BJ (cell line): ENCODE measurements at regions of chr9 and their contacts with region 1.

Region 1: DNA sequence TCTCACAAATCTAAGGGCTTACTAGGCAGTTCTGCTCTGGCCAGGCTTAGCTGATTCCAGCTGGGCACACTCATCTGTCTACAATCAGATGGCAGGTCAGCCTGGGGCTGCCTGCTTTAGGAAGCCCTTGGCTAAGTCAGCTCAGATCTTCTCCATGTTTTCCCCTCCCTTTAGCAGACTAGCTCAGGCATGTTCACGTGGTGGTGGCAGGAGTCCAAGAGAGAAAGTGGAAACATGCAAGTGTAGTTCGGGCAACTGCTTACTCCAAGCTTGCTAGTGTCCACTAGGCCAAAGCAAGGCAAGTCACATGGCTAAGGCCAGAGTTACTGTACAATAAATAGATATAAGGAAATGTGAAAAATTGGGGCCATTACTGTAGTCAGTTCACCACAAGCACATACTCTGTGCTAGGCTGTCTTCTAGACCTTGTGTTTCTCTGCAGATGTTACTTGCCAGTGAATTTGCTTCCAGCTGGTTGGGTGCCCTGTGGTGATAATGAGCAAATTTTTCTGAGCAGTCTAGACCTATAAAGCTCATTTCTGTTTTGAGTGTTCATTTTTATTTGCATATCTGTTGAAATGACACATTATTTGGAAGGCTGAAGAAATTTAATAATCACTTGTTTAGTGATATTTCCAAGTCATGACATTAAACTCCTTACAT is 38.3 kb downstream of the RECK start:
- DNase-seq: peak; percentile 49
- H3K4me3 ChIP-seq: no peak overlapping the region
- H3K27me3 ChIP-seq: no peaks in the 10 kb centered on the region
- CTCF ChIP-seq: no peak

Region 2: GRCh38 chr9:35945341-35946018 is 129.5 kb before region 1 on chr9:
- CTCF ChIA-PET with region 1: no interaction called
- POLR2A ChIA-PET with region 1: no interaction called
- DNase-seq: peak; percentile 26
- H3K4me3 ChIP-seq: no peak overlapping the region
- H3K27me3 ChIP-seq: no peaks in the 10 kb centered on the region
- CTCF ChIP-seq: peak; percentile 92

Region 3: GRCh38 chr9:36053971-36054370 is 21.0 kb before region 1 on chr9:
- CTCF ChIA-PET with region 1: no interaction called
- POLR2A ChIA-PET with region 1: interaction called, 15 read pairs
- DNase-seq: no peak
- H3K4me3 ChIP-seq: no peak overlapping the region
- H3K27me3 ChIP-seq: no peaks in the 10 kb centered on the region
- CTCF ChIP-seq: no peak

Region 4: DNA sequence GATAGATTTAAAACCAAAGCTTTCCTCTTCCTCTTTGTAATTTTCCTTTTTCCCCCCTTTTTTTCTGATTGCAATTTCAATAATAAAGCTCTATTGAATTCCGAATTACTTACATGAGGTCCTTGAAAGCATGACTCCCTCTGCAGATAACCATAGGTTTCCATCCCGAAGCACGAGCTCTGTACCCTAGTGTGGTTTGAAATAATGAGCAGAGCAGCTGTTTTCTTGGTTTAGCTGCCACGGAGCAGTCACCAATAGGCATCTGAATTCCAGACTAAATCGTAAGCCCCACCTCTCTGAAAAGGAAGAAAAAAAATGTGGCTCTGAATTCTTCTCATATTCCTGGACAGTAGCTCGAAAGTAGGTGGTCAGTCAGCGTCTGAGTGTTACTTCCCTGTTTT is 201.8 kb after region 1 on chr9:
- CTCF ChIA-PET with region 1: no interaction called
- POLR2A ChIA-PET with region 1: interaction called, 15 read pairs
- DNase-seq: peak; percentile 57
- H3K4me3 ChIP-seq: no peak overlapping the region
- H3K27me3 ChIP-seq: no peaks in the 10 kb centered on the region
- CTCF ChIP-seq: no peak